CD8-positive, alpha-beta T cell (primary cell): ENCODE measurements at regions of chr2 and their contacts with region 1.

Region 1: DNA sequence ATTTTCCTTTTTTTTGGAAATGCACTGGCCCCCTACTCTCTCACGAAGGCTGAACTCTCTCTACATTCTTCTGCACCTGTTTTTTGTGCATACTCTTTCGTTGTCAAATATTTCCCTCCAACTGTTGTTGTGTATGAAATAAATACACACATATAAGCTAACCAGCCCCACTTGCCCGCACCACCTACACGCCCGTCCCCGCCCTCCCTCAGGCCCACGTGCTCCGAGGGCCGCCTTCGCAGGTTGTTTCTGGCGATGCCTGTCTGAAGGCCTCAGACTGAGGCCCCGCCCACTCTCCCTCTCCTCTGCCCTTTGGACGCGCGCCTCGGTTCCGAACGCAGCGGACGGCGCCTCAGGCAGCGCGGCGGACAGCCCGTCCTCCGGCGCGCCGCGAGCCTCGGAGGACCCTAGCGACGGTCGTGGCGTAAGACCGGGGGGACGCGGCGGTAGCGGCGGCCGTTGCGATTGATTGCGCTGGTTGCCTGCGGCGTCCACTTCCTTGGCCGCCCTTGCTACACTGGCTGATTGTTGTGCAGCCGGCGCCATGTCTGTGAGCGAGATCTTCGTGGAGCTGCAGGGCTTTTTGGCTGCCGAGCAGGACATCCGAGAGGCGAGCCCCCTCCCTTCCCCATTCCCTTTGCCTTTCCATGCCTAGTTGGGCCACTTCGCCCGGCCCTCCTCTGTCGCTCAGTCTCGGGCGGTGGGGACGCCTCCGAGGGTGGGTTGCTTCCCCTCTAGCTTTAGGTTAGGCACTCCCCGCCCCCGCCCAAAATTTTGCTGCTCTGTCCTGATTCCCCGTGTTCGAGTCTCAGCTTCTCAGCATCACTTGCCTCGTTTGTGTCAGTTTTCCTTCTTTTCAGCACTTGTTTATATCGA is at the start of gene TSN:
- DNase-seq: peak; percentile 95 to 99 (median 98)
- ATAC-seq: peak; percentile 99
- H3K4me3 ChIP-seq: peak within 1 kb of the TSS; percentile 81 to 98
- H3K4me3 Mint-ChIP-seq: peak within 1 kb of the TSS; percentile 95
- H3K27ac ChIP-seq: peak within 1 kb of the TSS; percentile 65 to 85
- H3K27ac Mint-ChIP-seq: peak within 1 kb of the TSS; percentile 92
- H3K4me1 ChIP-seq: peaks cover 20% of the 10 kb centered on the region
- H3K4me1 Mint-ChIP-seq: peaks cover 27% of the 10 kb centered on the region
- H3K27me3 ChIP-seq: no peaks in the 10 kb centered on the region
- H3K27me3 Mint-ChIP-seq: no peaks in the 10 kb centered on the region
- CTCF ChIP-seq: no peak
- total RNA-seq, gene TSN: 66.8 to 75.2 TPM

Region 2: DNA sequence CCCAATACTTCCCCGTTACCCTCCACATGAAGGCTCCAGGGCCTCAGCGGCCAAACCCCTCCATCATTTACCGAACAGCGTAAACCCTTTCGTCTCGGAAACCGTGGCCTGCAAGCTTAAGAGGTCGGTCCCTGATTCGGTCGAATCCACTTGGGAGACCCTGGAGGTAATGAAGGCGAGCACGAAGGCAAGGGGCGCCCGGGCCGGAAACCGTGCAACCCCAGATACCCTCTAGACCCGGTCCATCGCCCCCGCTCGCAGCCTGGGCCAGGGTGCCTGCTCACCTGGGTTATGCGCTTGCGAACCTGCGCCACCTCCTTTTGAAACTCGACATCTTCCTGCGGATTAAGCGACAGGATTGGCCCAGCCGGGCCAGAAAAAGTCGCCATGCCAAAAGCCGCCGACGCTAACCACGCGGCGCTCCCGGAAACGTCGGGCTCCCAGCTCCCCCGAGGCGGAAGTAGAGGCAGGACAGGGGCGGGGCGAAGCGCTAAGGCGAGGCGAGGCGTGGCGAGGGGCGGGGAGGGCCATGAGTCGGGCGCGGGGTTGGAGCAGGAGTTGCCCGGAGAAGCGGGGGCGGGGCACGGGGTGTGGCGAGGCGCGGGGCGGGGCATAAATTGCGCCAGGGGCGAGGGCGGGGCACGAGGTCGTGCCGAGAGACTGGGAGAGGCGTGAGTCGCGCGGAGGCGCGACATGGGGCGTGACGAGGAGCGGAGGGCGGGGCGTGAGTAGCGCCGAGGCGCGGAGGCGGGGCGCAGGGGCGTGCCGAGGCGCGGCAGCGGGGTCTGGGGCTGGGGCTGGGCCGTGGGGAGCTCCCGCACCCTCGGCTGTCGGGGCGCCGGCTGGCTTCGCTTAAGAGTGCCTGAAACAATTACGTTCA is 18.8 kb before region 1 on chr2 and contains the start of gene NIFK:
- CTCF ChIA-PET with region 1: interaction called, 5 read pairs
- POLR2A ChIA-PET with region 1: interaction called, 37 read pairs
- intact Hi-C with region 1: loop called (anchors 1 kb)
- DNase-seq: peak; percentile 99 to 100 (median 100)
- ATAC-seq: peak; percentile 90
- H3K4me3 ChIP-seq: peak within 1 kb of the TSS; percentile 78 to 96
- H3K4me3 Mint-ChIP-seq: peak within 1 kb of the TSS; percentile 96
- H3K27ac ChIP-seq: peak within 1 kb of the TSS; percentile 83 to 88
- H3K27ac Mint-ChIP-seq: peak within 1 kb of the TSS; percentile 97
- H3K4me1 ChIP-seq: peaks cover 32% of the 10 kb centered on the region
- H3K4me1 Mint-ChIP-seq: peaks cover 46% of the 10 kb centered on the region
- H3K27me3 ChIP-seq: no peaks in the 10 kb centered on the region
- H3K27me3 Mint-ChIP-seq: no peaks in the 10 kb centered on the region
- CTCF ChIP-seq: no peak
- total RNA-seq, gene NIFK: 43.0 to 49.6 TPM

Region 3: GRCh38 chr2:122231296-122231695 is 475.8 kb after region 1 on chr2:
- CTCF ChIA-PET with region 1: no interaction called
- POLR2A ChIA-PET with region 1: no interaction called
- intact Hi-C with region 1: no loop called
- DNase-seq: no peak
- ATAC-seq: no peak
- H3K4me3 ChIP-seq: no peak overlapping the region
- H3K4me3 Mint-ChIP-seq: no peak overlapping the region
- H3K27ac ChIP-seq: no peak overlapping the region
- H3K27ac Mint-ChIP-seq: no peak overlapping the region
- H3K4me1 ChIP-seq: no peaks in the 10 kb centered on the region
- H3K4me1 Mint-ChIP-seq: no peaks in the 10 kb centered on the region
- H3K27me3 ChIP-seq: no peaks in the 10 kb centered on the region
- H3K27me3 Mint-ChIP-seq: no peaks in the 10 kb centered on the region
- CTCF ChIP-seq: no peak